ENCODE measurements at regions of chr11 and their contacts with region 1.

Region 1: DNA sequence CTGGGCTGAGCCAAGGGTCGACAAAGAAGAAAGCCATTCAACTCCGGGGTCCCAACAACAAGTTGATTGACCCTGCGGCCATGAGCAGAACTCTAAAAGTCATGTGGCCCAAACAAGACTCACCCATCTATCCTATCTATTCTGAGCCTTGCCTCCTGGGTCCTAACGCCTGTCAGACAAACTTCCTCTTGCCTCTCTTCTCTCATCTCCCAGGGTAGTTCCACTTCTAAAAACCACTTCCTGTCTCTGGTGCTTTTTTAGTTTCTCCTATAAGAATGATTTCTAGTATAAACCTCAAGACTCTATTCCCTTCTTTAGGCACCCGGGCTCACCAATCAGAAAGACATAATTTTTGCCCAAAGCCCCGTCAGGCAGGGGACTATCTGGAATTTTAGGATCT is 530.2 kb downstream of the DLG2 start:
- DNase-seq: no peak
- ATAC-seq: no peak
- H3K4me3 ChIP-seq: no peak overlapping the region
- H3K27ac ChIP-seq: no peak overlapping the region
- H3K4me1 ChIP-seq: no peaks in the 10 kb centered on the region
- H3K27me3 ChIP-seq: no peaks in the 10 kb centered on the region
- CTCF ChIP-seq: no peak

Region 2: DNA sequence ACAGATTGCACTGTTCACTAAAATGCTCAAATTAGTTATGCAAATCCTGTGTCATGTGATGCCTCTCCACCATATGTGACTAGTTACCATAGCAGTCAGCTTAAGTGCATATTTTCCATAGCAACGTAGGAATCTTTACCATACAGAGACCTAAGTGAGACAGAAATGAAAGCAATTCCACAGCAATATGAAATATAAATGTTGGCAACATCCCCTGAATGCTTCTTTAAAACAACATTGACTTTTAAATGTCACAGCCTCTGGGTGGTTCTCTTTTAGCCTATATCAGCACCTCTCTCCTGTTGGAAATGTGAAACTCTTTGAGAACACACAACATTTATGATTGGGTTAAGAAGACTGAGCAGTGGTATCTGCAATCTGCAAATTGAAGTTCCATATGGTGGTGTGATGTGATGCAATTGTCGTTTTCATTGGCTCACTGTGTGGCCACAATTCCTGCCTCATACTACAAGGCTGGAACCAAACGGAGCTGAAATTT is 284.4 kb before region 1 on chr11:
- CTCF ChIA-PET with region 1: no interaction called
- POLR2A ChIA-PET with region 1: no interaction called
- in situ Hi-C with region 1: no loop called
- intact Hi-C with region 1: no loop called
- DNase-seq: no peak
- ATAC-seq: no peak
- H3K4me3 ChIP-seq: no peak overlapping the region
- H3K27ac ChIP-seq: no peak overlapping the region
- H3K4me1 ChIP-seq: no peaks in the 10 kb centered on the region
- H3K27me3 ChIP-seq: no peaks in the 10 kb centered on the region; the same call in 1 of the 2 replicates
- CTCF ChIP-seq: no peak

Region 3: GRCh38 chr11:85029911-85030332 is 67.0 kb before region 1 on chr11:
- CTCF ChIA-PET with region 1: no interaction called
- POLR2A ChIA-PET with region 1: no interaction called
- in situ Hi-C with region 1: no loop called
- intact Hi-C with region 1: loop called (anchors 10 kb)
- DNase-seq: no peak
- ATAC-seq: no peak
- H3K4me3 ChIP-seq: no peak overlapping the region
- H3K27ac ChIP-seq: no peak overlapping the region
- H3K4me1 ChIP-seq: no peaks in the 10 kb centered on the region
- H3K27me3 ChIP-seq: no peaks in the 10 kb centered on the region
- CTCF ChIP-seq: no peak

Region 4: GRCh38 chr11:85062320-85063058 is 34.5 kb before region 1 on chr11:
- CTCF ChIA-PET with region 1: no interaction called
- POLR2A ChIA-PET with region 1: no interaction called
- in situ Hi-C with region 1: no loop called
- intact Hi-C with region 1: no loop called
- DNase-seq: no peak
- ATAC-seq: no peak
- H3K4me3 ChIP-seq: no peak overlapping the region
- H3K27ac ChIP-seq: no peak overlapping the region
- H3K4me1 ChIP-seq: no peaks in the 10 kb centered on the region
- H3K27me3 ChIP-seq: no peaks in the 10 kb centered on the region
- CTCF ChIP-seq: no peak